ENCODE measurements at regions of chr2 and their contacts with region 1.

Region 1: DNA sequence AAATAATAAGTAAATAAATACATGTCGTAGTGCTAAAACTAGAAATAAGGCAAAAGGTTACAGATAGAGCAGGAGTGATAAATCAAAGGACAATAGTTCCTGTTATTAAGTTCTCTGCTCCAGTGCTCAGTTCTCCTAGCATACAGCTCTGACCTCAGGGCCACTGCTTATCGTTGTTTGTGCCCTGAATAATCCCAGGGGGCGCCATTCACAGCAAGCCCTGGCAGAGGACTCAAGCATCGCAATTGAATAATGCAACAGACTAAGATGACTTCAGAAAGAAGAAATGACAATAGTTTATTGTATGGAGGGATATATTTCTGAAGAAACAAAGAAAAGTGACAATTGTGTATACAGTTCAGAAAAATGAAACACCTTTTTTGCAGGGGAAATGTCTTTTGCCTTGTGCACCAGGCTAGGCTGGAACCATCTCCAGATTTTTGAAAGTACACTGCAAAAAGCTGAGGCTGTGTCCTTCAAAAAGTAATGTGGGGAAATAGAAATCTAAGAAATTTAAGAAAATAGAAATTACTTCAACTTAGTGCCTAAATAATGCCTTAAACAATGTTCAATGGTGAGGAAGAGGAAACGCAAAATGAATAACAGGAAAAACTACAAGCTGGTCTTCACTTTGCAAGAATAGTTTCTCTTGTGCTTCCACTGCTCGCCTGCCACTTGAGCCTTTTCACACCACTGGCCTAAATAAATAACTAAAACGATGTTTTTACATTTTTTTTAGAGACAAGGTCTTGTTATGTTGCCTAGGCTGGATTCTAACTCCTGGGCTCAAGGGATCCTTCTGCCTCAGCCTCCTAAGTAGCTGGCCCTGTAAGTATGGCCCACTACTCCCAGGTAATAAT is 19.0 kb upstream of the CCNYL1 start:
- DNase-seq: peak in 1 of 2 experiments; percentile 56
- H3K4me3 ChIP-seq: no peak overlapping the region
- H3K27ac ChIP-seq: no peak overlapping the region
- H3K4me1 ChIP-seq: no peaks in the 10 kb centered on the region
- H3K27me3 ChIP-seq: no peaks in the 10 kb centered on the region
- CTCF ChIP-seq: peak; percentile 63 to 78 (median 74)
- EP300 ChIP-seq: no peak
- POLR2A ChIP-seq: no peak
- RAD21 ChIP-seq: peak; percentile 44 to 58

Region 2: DNA sequence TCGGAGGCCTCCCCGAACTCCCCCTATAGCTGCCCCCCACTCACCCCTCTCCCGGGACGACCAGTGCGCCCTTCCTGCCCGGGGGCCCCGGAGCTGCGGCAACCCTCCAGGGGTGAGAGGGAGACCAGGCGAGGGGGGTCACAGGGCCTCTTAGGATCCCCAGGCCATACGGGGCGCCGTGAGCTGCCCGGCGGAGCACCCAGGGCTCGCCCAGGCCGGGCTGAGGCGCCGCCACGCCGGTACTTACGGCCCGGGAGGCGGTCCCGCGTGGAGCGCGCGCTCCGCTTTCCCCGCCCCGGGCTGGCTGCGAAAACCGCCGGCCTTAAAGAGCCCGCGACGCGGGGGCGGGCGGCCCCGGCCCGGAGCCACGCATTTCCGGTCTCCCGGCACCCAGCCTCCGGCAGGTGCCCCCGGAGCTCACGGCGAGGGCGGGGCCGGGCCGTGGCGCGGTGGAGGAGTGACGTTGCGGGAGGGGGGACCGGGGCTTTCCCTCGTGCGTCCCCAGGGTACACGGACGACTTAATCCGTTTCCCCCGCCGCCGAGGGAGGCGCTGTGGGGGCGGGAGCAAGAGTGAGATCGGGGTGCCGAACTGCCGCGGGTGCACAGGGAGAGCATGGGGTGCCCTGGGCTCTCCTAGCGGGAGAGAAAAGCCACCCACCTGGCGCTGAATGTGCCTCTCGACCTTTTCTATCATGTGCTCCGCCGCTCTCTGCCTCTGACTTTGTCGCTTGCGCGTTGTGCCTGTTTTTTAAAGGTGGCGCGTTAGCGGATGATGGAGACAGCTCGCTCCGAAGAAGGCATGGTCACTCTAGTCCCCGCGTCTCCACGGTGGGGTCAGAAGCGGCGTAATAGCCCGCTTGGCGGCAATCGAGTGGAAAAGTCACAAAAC is 67.2 kb before region 1 on chr2 and contains the start of gene METTL21A:
- CTCF ChIA-PET with region 1: interaction called, 29 read pairs
- POLR2A ChIA-PET with region 1: no interaction called
- DNase-seq: peak; percentile 46 to 86
- H3K4me3 ChIP-seq: peak within 1 kb of the TSS; percentile 67 to 94 (median 82)
- H3K27ac ChIP-seq: peak within 1 kb of the TSS; percentile 72
- H3K4me1 ChIP-seq: peaks cover 0 to 4% (median 0%) of the 10 kb centered on the region in 4 experiments; a peak in 1 of 7 replicates
- H3K27me3 ChIP-seq: no peaks in the 10 kb centered on the region
- CTCF ChIP-seq: peak; percentile 37 to 45 (median 37); a peak in 3 of 4 replicates
- EP300 ChIP-seq: peak in 1 of 2 experiments; percentile 13; a peak in 1 of 3 replicates
- POLR2A ChIP-seq: peak; percentile 58 to 78
- RAD21 ChIP-seq: 0 out of 4 replicates have a peak, but pooled peaks have one; percentile 10 to 16
- total RNA-seq, gene METTL21A: 52.2 and 55.0 TPM in 2 replicates

Region 3: DNA sequence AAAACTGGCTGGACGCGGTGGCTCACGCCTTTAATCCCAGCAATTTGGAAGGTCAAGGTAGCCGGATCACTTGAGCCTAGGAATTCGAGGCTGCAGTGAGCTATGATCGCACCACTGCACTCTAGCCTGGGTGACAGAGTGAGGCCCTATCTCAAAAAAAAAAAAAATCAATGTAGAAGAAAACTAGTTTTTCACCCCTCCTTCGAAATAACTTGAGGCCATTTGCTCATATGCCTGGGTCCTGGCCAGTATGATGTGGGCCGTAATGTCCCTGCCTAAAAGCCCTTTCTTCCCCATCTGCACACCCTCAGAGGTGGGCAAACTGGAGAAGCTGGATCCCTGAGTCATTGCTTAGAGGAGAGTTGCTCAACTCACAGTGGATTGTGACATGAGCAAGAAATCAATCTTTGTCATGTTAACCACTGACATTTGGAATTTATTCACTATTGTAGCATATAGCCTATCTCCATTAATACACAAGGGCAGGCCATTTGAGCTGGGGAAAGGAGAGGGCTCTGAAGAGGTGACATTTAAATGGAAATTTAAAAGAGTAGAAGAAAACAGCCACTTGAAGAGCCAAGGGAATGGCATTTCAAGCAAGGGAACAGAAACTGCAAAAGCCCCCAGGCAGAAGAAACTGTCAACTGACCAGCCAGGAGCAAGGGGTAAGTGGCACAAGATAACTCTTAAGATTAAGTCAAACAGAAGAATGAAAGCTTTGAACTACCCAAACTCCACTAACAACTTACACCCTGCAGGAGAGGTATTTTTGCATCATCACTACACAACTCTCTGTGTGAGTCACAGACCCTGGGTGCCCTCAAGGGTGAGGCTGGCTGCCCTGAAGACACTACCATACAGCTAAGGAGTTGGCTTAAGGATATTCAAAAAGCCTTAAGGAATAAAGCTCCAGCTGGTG is 59.6 kb before region 1 on chr2:
- CTCF ChIA-PET with region 1: interaction called, 29 read pairs
- POLR2A ChIA-PET with region 1: no interaction called
- DNase-seq: no peak
- H3K4me3 ChIP-seq: no peak overlapping the region
- H3K27ac ChIP-seq: no peak overlapping the region
- H3K4me1 ChIP-seq: peaks cover 0 to 5% (median 0%) of the 10 kb centered on the region in 4 experiments; a peak in 1 of 7 replicates
- H3K27me3 ChIP-seq: no peaks in the 10 kb centered on the region
- CTCF ChIP-seq: no peak
- EP300 ChIP-seq: no peak
- POLR2A ChIP-seq: no peak
- RAD21 ChIP-seq: no peak

Region 4: DNA sequence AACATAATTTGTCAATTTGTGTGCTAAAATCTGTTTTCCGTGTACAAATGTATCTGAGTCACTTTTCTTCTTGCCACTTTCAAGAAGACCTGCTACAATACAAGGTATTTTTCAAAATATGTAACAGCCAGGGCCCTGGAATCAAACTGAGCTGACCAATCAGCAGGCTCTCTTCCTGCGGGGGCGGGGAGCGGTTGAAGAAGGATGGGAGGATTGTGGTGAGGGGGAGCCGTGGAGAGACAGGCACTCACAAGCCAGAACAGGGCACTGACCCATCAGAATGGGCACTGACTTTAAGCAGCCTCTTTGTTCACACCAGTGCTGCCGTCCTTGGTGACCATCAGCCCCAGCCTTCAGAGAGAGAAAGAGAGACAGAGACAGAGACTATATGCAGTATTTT is 21.5 kb before region 1 on chr2:
- CTCF ChIA-PET with region 1: interaction called, 13 read pairs
- POLR2A ChIA-PET with region 1: interaction called, 3 read pairs
- DNase-seq: peak in 1 of 2 experiments; percentile 61
- H3K4me3 ChIP-seq: no peak overlapping the region
- H3K27ac ChIP-seq: no peak overlapping the region
- H3K4me1 ChIP-seq: peaks cover 0 to 7% (median 2%) of the 10 kb centered on the region in 4 experiments; a peak in 5 of 7 replicates
- H3K27me3 ChIP-seq: no peaks in the 10 kb centered on the region
- CTCF ChIP-seq: no peak
- EP300 ChIP-seq: no peak
- POLR2A ChIP-seq: no peak
- RAD21 ChIP-seq: no peak

Region 5: DNA sequence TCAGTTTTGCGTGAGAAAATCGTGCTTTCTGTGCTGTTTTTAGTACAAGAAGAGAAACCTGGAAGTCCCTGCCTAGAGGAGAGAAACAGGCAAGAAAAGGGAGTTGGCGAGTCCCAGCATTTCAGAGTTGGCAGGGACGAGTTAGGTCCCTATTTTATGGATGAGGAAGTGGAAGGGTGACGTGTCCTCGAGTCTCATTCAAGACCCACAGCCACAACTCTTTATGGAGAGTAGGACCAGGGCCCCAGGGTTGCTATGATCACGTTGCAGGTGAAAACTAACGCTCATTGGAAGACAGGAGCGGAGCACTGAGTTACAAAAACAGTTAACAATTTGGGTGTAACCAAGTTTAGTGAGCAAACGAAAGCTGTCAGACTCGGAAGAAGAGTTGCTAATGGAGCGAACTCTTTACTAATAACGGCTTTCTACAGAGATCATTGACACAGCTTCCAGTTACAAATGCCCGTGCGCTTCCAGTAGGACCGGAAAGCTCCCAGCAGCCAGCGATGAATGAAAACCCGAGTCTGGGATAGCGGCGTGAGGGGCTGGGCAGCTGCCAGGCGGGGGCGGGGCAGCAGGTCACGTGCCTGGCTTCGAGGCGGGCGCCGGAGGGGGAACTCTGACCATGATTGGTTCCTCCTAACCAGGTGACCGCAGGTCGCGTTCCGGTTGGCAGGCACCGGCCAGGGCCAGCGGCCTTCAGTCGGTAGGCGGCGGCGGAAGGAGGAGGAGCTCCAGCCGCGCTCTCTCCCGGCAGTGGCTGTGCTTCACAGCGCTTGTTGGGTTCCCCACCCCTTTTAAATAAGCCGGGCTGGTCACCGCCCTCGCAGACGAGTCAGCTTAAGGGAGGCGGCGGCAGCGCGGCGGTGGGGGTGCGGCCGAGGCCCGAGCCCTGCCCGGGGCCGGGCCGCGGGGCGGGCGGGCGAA is 18.6 kb after region 1 on chr2 and contains the start of gene CCNYL1:
- CTCF ChIA-PET with region 1: interaction called, 85 read pairs
- POLR2A ChIA-PET with region 1: interaction called, 20 read pairs
- DNase-seq: peak; percentile 95 to 99
- H3K4me3 ChIP-seq: peak within 1 kb of the TSS; percentile 71 to 91 (median 84)
- H3K27ac ChIP-seq: peak within 1 kb of the TSS; percentile 41; the same call in 1 of the 2 replicates
- H3K4me1 ChIP-seq: peaks cover 0 to 3% (median under 1%) of the 10 kb centered on the region in 4 experiments; a peak in 4 of 7 replicates
- H3K27me3 ChIP-seq: no peaks in the 10 kb centered on the region
- CTCF ChIP-seq: no peak
- EP300 ChIP-seq: no peak
- POLR2A ChIP-seq: peak; percentile 97 to 99
- RAD21 ChIP-seq: no peak
- total RNA-seq, gene CCNYL1: 35.4 and 36.2 TPM in 2 replicates

Region 6: GRCh38 chr2:207720517-207721208 is 28.2 kb after region 1 on chr2:
- CTCF ChIA-PET with region 1: interaction called, 10 read pairs
- POLR2A ChIA-PET with region 1: no interaction called
- DNase-seq: no peak
- H3K4me3 ChIP-seq: no peak overlapping the region
- H3K27ac ChIP-seq: no peak overlapping the region
- H3K4me1 ChIP-seq: 0 out of 7 replicates have a peak, but pooled peaks cover 0 to 3% (median 0%) of the 10 kb centered on the region in 4 experiments
- H3K27me3 ChIP-seq: no peaks in the 10 kb centered on the region
- CTCF ChIP-seq: no peak
- EP300 ChIP-seq: no peak
- POLR2A ChIP-seq: no peak
- RAD21 ChIP-seq: no peak

Region 7: GRCh38 chr2:207734264-207734635 is 41.8 kb after region 1 on chr2:
- CTCF ChIA-PET with region 1: interaction called, 13 read pairs
- POLR2A ChIA-PET with region 1: no interaction called
- DNase-seq: no peak
- H3K4me3 ChIP-seq: no peak overlapping the region
- H3K27ac ChIP-seq: no peak overlapping the region
- H3K4me1 ChIP-seq: 0 out of 7 replicates have a peak, but pooled peaks cover 0 to 2% (median 0%) of the 10 kb centered on the region in 4 experiments
- H3K27me3 ChIP-seq: no peaks in the 10 kb centered on the region
- CTCF ChIP-seq: peak in 2 of 3 experiments; percentile 10 to 18; a peak in 2 of 4 replicates
- EP300 ChIP-seq: no peak
- POLR2A ChIP-seq: no peak
- RAD21 ChIP-seq: peak; percentile 24 to 31; a peak in 2 of 4 replicates

Region 8: GRCh38 chr2:208213508-208214120 is 521.2 kb after region 1 on chr2:
- CTCF ChIA-PET with region 1: no interaction called
- POLR2A ChIA-PET with region 1: no interaction called
- DNase-seq: no peak
- H3K4me3 ChIP-seq: no peak overlapping the region
- H3K27ac ChIP-seq: no peak overlapping the region
- H3K4me1 ChIP-seq: 0 out of 7 replicates have a peak, but pooled peaks cover 0 to 2% (median 0%) of the 10 kb centered on the region in 4 experiments
- H3K27me3 ChIP-seq: no peaks in the 10 kb centered on the region
- CTCF ChIP-seq: no peak
- EP300 ChIP-seq: no peak
- POLR2A ChIP-seq: no peak
- RAD21 ChIP-seq: no peak

Measured in H1 (cell line).